Colonic mucosa (tissue), 4 donors: ENCODE measurements at regions of chr2 and their contacts with region 1.

Region 1: DNA sequence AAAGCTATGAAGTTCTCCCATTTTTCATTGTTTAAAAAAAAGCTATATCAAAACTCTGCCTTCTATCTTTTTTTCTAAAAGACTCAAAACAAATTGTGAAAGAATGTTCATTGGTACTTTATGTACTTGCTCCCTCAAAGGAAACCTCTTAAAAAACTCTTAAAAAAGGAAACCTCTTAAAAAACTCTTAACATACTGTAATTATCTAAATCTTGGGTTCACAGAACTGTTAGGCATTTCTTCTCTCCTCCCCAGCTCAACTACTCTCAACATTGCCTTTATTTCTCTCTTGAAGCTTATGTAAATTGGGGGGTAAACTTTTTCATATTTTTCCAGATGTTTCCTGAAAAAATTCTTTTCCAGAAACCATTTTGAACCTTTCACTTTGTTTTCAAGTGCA is 330.5 kb upstream of the SLC39A10 start:
- DNase-seq: no peak
- H3K4me3 ChIP-seq: no peak overlapping the region
- H3K27ac ChIP-seq: no peak overlapping the region
- H3K4me1 ChIP-seq: no peaks in the 10 kb centered on the region
- H3K27me3 ChIP-seq: no peaks in the 10 kb centered on the region
- CTCF ChIP-seq: no peak

Region 2: DNA sequence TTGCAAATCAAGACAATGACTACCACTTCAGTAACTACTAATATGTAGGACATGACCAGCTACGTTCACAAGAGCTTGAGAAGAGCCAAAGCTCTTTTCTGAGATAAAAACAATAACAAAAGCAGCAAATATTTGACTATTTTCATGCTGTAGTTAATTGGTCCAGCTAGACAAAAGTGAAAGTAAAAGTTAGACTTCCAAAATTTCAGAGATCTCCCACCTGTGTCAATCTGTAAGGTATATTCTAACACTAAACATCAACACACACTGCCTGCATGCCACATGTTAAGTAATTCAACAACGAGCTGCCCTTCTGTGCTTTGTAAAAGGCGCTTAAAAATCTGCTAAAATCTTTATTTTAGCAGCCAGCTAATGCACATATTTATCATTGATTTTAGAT is 516.4 kb after region 1 on chr2:
- intact Hi-C with region 1: loop called (anchors 5 kb)
- DNase-seq: no peak
- H3K4me3 ChIP-seq: no peak overlapping the region
- H3K27ac ChIP-seq: no peak overlapping the region
- H3K4me1 ChIP-seq: no peaks in the 10 kb centered on the region
- H3K27me3 ChIP-seq: no peaks in the 10 kb centered on the region
- CTCF ChIP-seq: no peak